ENCODE measurements at regions of chr20 and their contacts with region 1.

Region 1: GRCh38 chr20:51220293-51220706 is 197.4 kb upstream of the KCNG1 start:
- DNase-seq: peak in 13 of 14 experiments; percentile 19 to 62 (median 34)
- ATAC-seq: peak; percentile 48
- H3K4me3 ChIP-seq: no peak overlapping the region
- H3K4me3 Mint-ChIP-seq: no peak overlapping the region
- H3K27ac ChIP-seq: no peak overlapping the region
- H3K27ac Mint-ChIP-seq: no peak overlapping the region
- H3K4me1 ChIP-seq: peaks cover 5% of the 10 kb centered on the region
- H3K4me1 Mint-ChIP-seq: peaks cover 4% of the 10 kb centered on the region
- H3K27me3 ChIP-seq: peaks cover 26 to 33% of the 10 kb centered on the region in 2 experiments
- H3K27me3 Mint-ChIP-seq: peaks cover 70% of the 10 kb centered on the region
- CTCF ChIP-seq: peak; percentile 73

Region 2: GRCh38 chr20:51595058-51595532 is 374.8 kb after region 1 on chr20:
- CTCF ChIA-PET with region 1: no interaction called
- POLR2A ChIA-PET with region 1: no interaction called
- intact Hi-C with region 1: loop called (anchors 1 to 10 kb)
- DNase-seq: peak; percentile 55 to 86 (median 74)
- ATAC-seq: peak; percentile 96
- H3K4me3 ChIP-seq: no peak overlapping the region
- H3K4me3 Mint-ChIP-seq: peak overlapping the region; percentile 23
- H3K27ac ChIP-seq: no peak overlapping the region
- H3K27ac Mint-ChIP-seq: no peak overlapping the region
- H3K4me1 ChIP-seq: peaks cover 7% of the 10 kb centered on the region
- H3K4me1 Mint-ChIP-seq: peaks cover 13% of the 10 kb centered on the region
- H3K27me3 ChIP-seq: no peaks in the 10 kb centered on the region
- H3K27me3 Mint-ChIP-seq: no peaks in the 10 kb centered on the region
- CTCF ChIP-seq: peak; percentile 83

Measured in CD4-positive, alpha-beta T cell (primary cell).